ENCODE measurements at regions of chr1 and their contacts with region 1.

Region 1: DNA sequence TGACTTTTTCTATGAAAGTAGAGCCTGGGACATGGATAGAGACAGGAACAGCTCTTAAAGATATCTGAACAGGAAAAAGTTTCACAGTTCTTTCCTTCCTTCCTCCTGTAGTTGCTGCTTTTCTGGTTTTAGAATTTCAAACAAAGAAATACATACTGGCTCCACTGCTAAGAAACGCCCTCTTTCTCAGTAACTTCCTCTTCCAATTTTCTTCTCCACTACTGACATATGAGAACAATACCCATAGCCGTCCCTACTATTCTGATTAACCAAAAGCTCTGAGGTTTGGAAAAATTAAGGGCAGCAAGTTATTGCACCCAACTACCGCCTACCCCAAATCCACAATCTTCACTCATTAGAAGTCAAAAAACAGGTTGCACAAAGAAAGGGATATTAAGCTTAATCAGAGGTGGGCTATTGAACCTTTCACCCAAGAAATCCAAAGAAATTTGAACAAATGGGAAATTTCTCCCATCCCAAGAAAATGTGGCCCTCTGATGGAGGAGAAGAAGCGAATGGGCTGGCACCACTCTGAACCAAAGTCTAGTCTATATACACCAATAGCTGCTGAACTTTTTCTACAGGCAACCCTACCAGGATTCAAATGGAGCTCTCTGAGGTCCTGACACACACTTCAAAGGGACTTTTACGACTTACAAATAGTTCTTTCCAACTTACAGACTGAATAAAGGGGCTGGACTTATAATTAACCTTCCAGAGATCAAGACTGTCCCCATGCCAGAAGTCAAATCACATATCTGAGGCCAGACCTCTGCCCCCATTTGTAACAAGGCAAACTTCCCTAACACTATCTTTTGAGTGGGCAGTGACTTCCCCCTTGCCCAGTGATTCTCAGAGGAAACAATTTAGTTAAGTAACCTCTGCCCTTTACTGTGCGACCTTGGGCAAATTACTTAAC is 1.7 kb downstream of the WASF2 start:
- DNase-seq: peak in 1 of 35 experiments; percentile 48
- ATAC-seq: no peak
- H3K4me3 ChIP-seq: peak overlapping the region; percentile 82 to 98
- H3K4me3 Mint-ChIP-seq: peak overlapping the region; percentile 92 to 98 (median 96)
- H3K27ac ChIP-seq: peak overlapping the region; percentile 58
- H3K27ac Mint-ChIP-seq: peak overlapping the region; percentile 89 to 90
- H3K4me1 ChIP-seq: peaks cover 18 to 43% of the 10 kb centered on the region in 2 experiments
- H3K4me1 Mint-ChIP-seq: peaks cover 44 to 56% (median 47%) of the 10 kb centered on the region in 3 donors
- H3K27me3 ChIP-seq: no peaks in the 10 kb centered on the region
- H3K27me3 Mint-ChIP-seq: no peaks in the 10 kb centered on the region

Region 2: GRCh38 chr1:26618561-26618960 is 869.7 kb before region 1 on chr1:
- CTCF ChIA-PET with region 1: no interaction called
- POLR2A ChIA-PET with region 1: no interaction called
- DNase-seq: no peak
- ATAC-seq: no peak
- H3K4me3 ChIP-seq: no peak overlapping the region
- H3K4me3 Mint-ChIP-seq: peak overlapping the region in 1 of 3 donors; percentile 23
- H3K27ac ChIP-seq: no peak overlapping the region
- H3K27ac Mint-ChIP-seq: peak overlapping the region in 1 of 2 donors; percentile 64
- H3K4me1 ChIP-seq: peaks cover 20 to 21% of the 10 kb centered on the region in 2 experiments
- H3K4me1 Mint-ChIP-seq: peaks cover 22 to 29% (median 23%) of the 10 kb centered on the region in 3 donors
- H3K27me3 ChIP-seq: no peaks in the 10 kb centered on the region
- H3K27me3 Mint-ChIP-seq: no peaks in the 10 kb centered on the region

Region 3: DNA sequence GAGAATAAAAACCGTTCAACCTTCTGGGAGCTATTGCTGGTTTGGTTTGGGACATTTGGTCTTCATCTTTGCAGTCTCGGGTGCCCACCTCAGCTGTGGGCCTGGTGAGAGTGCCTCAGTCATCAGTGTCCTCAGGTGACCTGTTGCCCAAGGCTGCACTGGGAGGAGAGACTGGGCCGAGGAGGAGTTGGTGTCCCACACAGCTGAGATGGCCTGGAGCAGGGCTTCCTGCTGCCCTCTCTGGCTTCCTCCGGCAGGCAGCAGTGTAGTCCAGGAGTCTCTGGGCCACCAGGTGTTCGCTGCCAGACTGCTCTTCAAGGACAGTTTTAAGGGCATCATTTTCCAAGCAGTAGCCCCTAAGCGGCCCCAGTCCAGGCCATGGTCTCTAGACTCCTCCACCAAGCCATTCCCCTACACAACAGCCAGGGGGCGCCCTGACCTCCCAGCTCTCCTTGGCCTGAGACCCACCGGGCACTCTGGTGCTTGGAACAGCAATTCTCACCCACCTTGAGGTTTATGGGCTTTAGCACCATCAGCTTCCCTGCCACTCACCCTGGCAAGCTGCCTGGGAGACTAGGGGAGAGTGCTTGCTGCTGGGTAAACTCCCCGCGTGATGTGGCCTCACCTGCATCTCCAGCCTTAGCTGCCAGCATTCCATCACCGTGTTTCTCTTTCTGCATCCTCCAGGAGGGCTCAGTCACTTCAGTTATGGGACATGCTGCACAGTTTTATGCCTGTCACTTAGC is 155.5 kb before region 1 on chr1:
- CTCF ChIA-PET with region 1: no interaction called
- POLR2A ChIA-PET with region 1: no interaction called
- DNase-seq: peak in 32 of 35 experiments; percentile 20 to 80 (median 48)
- ATAC-seq: peak; percentile 73 to 91 (median 80)
- H3K4me3 ChIP-seq: no peak overlapping the region
- H3K4me3 Mint-ChIP-seq: peak overlapping the region in 1 of 3 donors; percentile 5
- H3K27ac ChIP-seq: peak overlapping the region; percentile 32
- H3K27ac Mint-ChIP-seq: peak overlapping the region; percentile 44 to 75
- H3K4me1 ChIP-seq: peaks cover 3 to 24% of the 10 kb centered on the region in 2 experiments
- H3K4me1 Mint-ChIP-seq: peaks cover 36 to 43% (median 38%) of the 10 kb centered on the region in 3 donors
- H3K27me3 ChIP-seq: no peaks in the 10 kb centered on the region
- H3K27me3 Mint-ChIP-seq: no peaks in the 10 kb centered on the region

Region 4: DNA sequence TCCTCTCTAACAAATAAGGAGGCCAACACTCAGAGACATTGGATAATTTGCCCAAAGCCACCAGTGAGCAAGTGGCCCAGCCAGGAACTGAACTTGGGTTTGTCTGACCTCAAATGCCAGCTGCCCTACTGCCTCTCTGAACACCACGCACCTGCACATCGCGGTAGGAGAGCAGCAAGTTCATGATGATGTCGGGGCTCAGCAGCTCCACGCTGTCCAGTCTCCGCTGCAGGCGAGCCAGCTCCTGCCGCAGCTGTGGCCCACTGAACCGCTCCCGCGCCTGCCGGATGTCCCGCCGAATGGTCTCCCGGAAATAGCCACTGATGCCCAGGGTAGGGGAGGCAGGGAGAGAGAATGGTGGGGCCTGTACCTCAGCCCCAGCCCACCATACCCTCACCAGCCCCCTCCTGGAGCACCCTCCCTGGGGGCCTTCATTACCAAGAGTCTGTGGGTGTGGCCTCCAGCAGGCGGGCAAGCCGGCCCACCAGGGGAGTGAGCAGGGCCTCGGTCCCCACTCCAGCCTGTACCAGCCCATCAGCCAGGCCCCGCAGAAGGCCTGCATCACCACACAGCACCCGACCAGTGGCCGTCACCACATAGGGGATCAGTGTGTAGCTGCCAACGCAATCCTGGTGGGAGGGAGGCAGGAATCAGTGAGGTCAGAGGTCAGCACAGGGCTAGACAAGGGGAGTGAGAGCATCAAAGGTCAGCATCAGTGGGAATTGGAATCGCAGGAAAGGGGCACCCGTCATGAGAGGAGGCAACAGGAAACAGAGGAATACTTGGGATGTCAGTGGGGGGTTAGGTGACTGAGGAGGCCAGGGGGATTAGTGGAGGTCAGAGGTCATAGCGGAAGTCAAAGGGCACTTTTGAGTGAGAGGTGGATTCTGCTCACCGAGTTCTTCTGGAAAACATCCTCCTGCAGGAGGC is 124.2 kb before region 1 on chr1:
- CTCF ChIA-PET with region 1: no interaction called
- POLR2A ChIA-PET with region 1: no interaction called
- DNase-seq: no peak
- ATAC-seq: no peak
- H3K4me3 ChIP-seq: no peak overlapping the region
- H3K4me3 Mint-ChIP-seq: peak overlapping the region in 2 of 3 donors; percentile 6 to 61
- H3K27ac ChIP-seq: no peak overlapping the region
- H3K27ac Mint-ChIP-seq: peak overlapping the region in 1 of 2 donors; percentile 44
- H3K4me1 ChIP-seq: peaks cover 13 to 47% of the 10 kb centered on the region in 2 experiments
- H3K4me1 Mint-ChIP-seq: peaks cover 44 to 49% (median 46%) of the 10 kb centered on the region in 3 donors
- H3K27me3 ChIP-seq: peaks cover 0 to 7% of the 10 kb centered on the region in 2 experiments
- H3K27me3 Mint-ChIP-seq: no peaks in the 10 kb centered on the region

Region 5: DNA sequence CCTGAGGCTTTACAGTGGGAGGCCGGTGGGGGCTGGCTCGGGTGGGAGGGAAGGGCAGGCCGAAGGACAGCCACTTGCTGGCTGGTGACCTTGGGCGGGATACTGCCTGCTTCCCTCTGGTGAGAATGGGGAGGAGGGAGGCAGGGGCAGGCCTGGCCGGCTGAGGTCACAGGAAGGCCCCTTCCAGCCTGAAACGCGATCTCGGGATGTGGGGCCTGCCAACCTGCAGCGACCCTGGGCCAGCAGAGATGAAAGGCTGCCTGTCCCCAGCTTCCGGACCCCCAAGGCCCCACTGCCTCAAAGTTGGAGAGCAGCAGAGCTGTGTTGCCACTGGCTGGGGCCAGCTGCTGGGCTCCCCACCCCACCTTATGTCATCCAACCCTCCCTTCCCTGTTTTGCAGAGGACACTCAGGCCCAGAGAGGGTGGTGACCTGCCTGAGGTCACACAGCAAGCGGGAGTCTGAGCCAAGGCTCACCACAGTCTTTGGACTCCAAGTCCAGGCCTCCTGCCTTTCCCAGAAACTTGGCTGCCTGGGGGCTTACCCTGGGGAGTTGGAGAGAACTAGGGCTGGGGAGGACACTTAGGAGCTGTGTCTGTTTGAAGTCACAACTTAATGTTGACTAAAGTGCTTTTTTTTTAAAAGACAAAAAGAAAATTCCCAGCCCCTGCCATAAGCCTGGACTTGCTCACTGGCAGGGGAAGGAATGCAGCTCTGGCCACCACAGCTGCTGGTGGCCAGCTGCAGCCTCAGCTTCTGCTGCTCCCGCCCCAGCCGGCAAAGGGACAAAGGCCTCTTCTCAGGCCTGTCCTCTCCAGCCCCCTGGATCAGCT is 16.6 kb after region 1 on chr1:
- CTCF ChIA-PET with region 1: interaction called, 3 read pairs
- POLR2A ChIA-PET with region 1: interaction called in 1 of 2 experiments, 11 read pairs
- DNase-seq: no peak
- ATAC-seq: no peak
- H3K4me3 ChIP-seq: no peak overlapping the region
- H3K4me3 Mint-ChIP-seq: no peak overlapping the region
- H3K27ac ChIP-seq: no peak overlapping the region
- H3K27ac Mint-ChIP-seq: no peak overlapping the region
- H3K4me1 ChIP-seq: no peaks in the 10 kb centered on the region
- H3K4me1 Mint-ChIP-seq: no peaks in the 10 kb centered on the region
- H3K27me3 ChIP-seq: no peaks in the 10 kb centered on the region
- H3K27me3 Mint-ChIP-seq: no peaks in the 10 kb centered on the region

Region 6: GRCh38 chr1:27686223-27687018 is 198.2 kb after region 1 on chr1:
- CTCF ChIA-PET with region 1: no interaction called
- POLR2A ChIA-PET with region 1: no interaction called
- DNase-seq: no peak
- ATAC-seq: no peak
- H3K4me3 ChIP-seq: no peak overlapping the region
- H3K4me3 Mint-ChIP-seq: no peak overlapping the region
- H3K27ac ChIP-seq: no peak overlapping the region
- H3K27ac Mint-ChIP-seq: no peak overlapping the region
- H3K4me1 ChIP-seq: no peaks in the 10 kb centered on the region
- H3K4me1 Mint-ChIP-seq: peaks cover 0 to 3% (median 0%) of the 10 kb centered on the region in 3 donors
- H3K27me3 ChIP-seq: peaks cover 0 to 17% of the 10 kb centered on the region in 2 experiments
- H3K27me3 Mint-ChIP-seq: no peaks in the 10 kb centered on the region

Measured in T-cell (primary cell).